GM13977 (cell line): ENCODE measurements at regions of chr14 and their contacts with region 1.

Region 1: DNA sequence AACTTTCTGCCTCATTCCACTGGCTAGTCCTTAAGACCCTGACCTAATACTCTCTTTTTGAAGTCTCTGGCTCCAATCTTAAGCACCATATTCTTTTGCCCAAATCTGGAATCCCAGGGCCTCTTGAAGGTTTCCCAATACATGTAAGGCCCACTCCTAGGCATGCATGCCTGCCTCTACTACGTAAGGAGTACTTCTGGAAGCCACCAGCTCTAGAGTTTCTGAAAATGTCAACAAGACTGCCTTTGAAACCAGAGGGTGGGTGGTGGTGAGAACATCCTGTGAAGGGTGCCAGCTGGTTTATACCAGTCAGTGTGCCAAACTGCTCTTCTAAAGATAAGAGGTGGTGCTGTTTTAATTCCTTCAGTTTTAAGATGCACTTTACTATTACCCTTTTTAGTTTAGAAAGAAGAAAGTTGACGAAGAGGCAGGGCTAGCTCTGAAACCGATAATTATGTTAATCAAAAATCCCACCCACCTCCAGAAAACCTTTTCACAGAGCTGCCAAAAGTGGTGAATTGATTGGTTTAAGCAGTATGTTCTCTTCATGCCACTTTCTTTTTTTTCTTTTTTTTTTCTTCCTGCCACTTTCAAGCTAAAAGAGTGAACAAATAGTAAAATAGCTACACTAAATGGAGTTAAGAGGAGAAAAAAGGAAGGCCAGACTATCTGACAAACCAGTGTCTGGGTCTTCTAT is 8.7 kb upstream of the WDR89 start:
- DNase-seq: no peak
- CTCF ChIP-seq: no peak

Region 2: GRCh38 chr14:63468273-63468672 is 182.1 kb before region 1 on chr14:
- in situ Hi-C with region 1: no loop called
- DNase-seq: no peak
- CTCF ChIP-seq: no peak

Region 3: DNA sequence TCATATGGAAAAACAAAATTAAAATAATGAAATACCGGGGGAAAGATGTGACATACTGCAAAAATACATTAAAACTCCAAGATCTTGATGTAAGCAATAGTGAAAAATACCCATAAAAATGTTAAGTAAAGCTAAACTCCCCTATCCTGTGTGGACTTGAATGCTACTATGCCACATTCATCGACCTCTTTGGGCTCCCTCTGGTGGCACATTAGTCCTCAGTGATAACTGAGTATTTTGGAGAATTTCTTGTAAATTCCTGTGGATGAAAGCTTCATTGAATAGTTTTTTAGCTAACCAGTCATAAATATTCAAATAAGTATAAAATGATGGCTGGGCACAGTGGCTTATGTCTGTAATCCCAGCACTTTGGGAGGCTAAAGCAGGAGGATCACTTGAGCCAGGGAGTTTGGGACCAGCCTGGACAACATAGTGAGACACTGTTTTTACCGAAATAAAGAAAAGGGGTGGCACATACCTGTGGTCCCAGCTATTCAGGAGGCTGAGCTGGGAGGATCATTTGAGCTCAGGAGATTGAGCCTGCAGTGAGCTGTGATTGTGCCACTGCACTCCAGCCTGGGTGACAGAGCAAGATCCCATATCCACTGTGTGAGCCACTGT is 119.9 kb after region 1 on chr14:
- in situ Hi-C with region 1: loop called (anchors 10 kb)
- DNase-seq: peak; percentile 52
- CTCF ChIP-seq: peak; percentile 59